B cell (primary cell): ENCODE measurements at regions of chr14 and their contacts with region 1.

Region 1: GRCh38 chr14:102774391-102775153 is 2.7 kb upstream of the TRAF3 start:
- DNase-seq: peak; percentile 90
- ATAC-seq: peak; percentile 19
- H3K4me3 ChIP-seq: no peak overlapping the region
- H3K4me3 Mint-ChIP-seq: peak overlapping the region; percentile 81
- H3K27ac ChIP-seq: peak overlapping the region; percentile 95 to 97
- H3K27ac Mint-ChIP-seq: peak overlapping the region; percentile 98
- H3K4me1 ChIP-seq: peaks cover 54 to 67% of the 10 kb centered on the region in 2 donors
- H3K4me1 Mint-ChIP-seq: peaks cover 59% of the 10 kb centered on the region
- H3K27me3 ChIP-seq: no peaks in the 10 kb centered on the region
- H3K27me3 Mint-ChIP-seq: no peaks in the 10 kb centered on the region
- CTCF ChIP-seq: peak; percentile 75

Region 2: GRCh38 chr14:102900631-102901571 is 126.3 kb after region 1 on chr14:
- CTCF ChIA-PET with region 1: interaction called, 10 read pairs
- POLR2A ChIA-PET with region 1: interaction called, 5 read pairs
- intact Hi-C with region 1: loop called (anchors 1 kb)
- DNase-seq: peak; percentile 82
- ATAC-seq: peak; percentile 66
- H3K4me3 ChIP-seq: peak overlapping the region in 4 of 5 experiments; percentile 15 to 45 (median 30)
- H3K4me3 Mint-ChIP-seq: peak overlapping the region; percentile 85
- H3K27ac ChIP-seq: peak overlapping the region; percentile 91 to 93
- H3K27ac Mint-ChIP-seq: peak overlapping the region; percentile 98
- H3K4me1 ChIP-seq: peaks cover 62 to 71% of the 10 kb centered on the region in 2 donors
- H3K4me1 Mint-ChIP-seq: peaks cover 61% of the 10 kb centered on the region
- H3K27me3 ChIP-seq: no peaks in the 10 kb centered on the region
- H3K27me3 Mint-ChIP-seq: no peaks in the 10 kb centered on the region
- CTCF ChIP-seq: no peak

Region 3: GRCh38 chr14:102917469-102918211 is 143.1 kb after region 1 on chr14:
- CTCF ChIA-PET with region 1: interaction called, 18 read pairs
- POLR2A ChIA-PET with region 1: interaction called, 4 read pairs
- intact Hi-C with region 1: loop called (anchors 1 kb)
- DNase-seq: peak; percentile 79
- ATAC-seq: peak; percentile 28
- H3K4me3 ChIP-seq: peak overlapping the region in 1 of 5 experiments; percentile 16
- H3K4me3 Mint-ChIP-seq: peak overlapping the region; percentile 33
- H3K27ac ChIP-seq: peak overlapping the region; percentile 55 to 68
- H3K27ac Mint-ChIP-seq: peak overlapping the region; percentile 80
- H3K4me1 ChIP-seq: peaks cover 54 to 58% of the 10 kb centered on the region in 2 donors
- H3K4me1 Mint-ChIP-seq: peaks cover 48% of the 10 kb centered on the region
- H3K27me3 ChIP-seq: peaks cover 0 to 4% (median under 1%) of the 10 kb centered on the region in 4 experiments
- H3K27me3 Mint-ChIP-seq: no peaks in the 10 kb centered on the region
- CTCF ChIP-seq: peak; percentile 73

Region 4: GRCh38 chr14:103057365-103058096 is 283.0 kb after region 1 on chr14 and contains the start of gene CDC42BPB:
- CTCF ChIA-PET with region 1: no interaction called
- POLR2A ChIA-PET with region 1: no interaction called
- intact Hi-C with region 1: loop called (anchors 10 kb)
- DNase-seq: peak; percentile 88
- ATAC-seq: peak; percentile 87
- H3K4me3 ChIP-seq: peak within 1 kb of the TSS; percentile 26 to 73 (median 67)
- H3K4me3 Mint-ChIP-seq: peak within 1 kb of the TSS; percentile 85
- H3K27ac ChIP-seq: no peak within 1 kb of the TSS
- H3K27ac Mint-ChIP-seq: peak within 1 kb of the TSS; percentile 71
- H3K4me1 ChIP-seq: peaks cover 16 to 19% of the 10 kb centered on the region in 2 donors
- H3K4me1 Mint-ChIP-seq: peaks cover 31% of the 10 kb centered on the region
- H3K27me3 ChIP-seq: peaks cover 0 to 7% (median 0%) of the 10 kb centered on the region in 4 experiments
- H3K27me3 Mint-ChIP-seq: no peaks in the 10 kb centered on the region
- CTCF ChIP-seq: no peak
- total RNA-seq, gene CDC42BPB: 52.5 and 59.2 TPM in 2 replicates

Region 5: GRCh38 chr14:103847451-103848188 is 1073.0 kb after region 1 on chr14 and contains the start of gene PPP1R13B:
- CTCF ChIA-PET with region 1: no interaction called
- POLR2A ChIA-PET with region 1: no interaction called
- intact Hi-C with region 1: loop called (anchors 5 kb)
- DNase-seq: peak; percentile 95
- ATAC-seq: peak; percentile 97
- H3K4me3 ChIP-seq: peak within 1 kb of the TSS; percentile 44 to 73 (median 60)
- H3K4me3 Mint-ChIP-seq: peak within 1 kb of the TSS; percentile 91
- H3K27ac ChIP-seq: peak within 1 kb of the TSS in 1 of 2 donors; percentile 59
- H3K27ac Mint-ChIP-seq: peak within 1 kb of the TSS; percentile 83
- H3K4me1 ChIP-seq: peaks cover 10 to 14% of the 10 kb centered on the region in 2 donors
- H3K4me1 Mint-ChIP-seq: peaks cover 16% of the 10 kb centered on the region
- H3K27me3 ChIP-seq: no peaks in the 10 kb centered on the region
- H3K27me3 Mint-ChIP-seq: no peaks in the 10 kb centered on the region
- CTCF ChIP-seq: no peak
- total RNA-seq, gene PPP1R13B: 27.7 and 38.6 TPM in 2 replicates